Posterior vena cava (tissue), 2 donors: ENCODE measurements at regions of chr3 and their contacts with region 1.

Region 1: DNA sequence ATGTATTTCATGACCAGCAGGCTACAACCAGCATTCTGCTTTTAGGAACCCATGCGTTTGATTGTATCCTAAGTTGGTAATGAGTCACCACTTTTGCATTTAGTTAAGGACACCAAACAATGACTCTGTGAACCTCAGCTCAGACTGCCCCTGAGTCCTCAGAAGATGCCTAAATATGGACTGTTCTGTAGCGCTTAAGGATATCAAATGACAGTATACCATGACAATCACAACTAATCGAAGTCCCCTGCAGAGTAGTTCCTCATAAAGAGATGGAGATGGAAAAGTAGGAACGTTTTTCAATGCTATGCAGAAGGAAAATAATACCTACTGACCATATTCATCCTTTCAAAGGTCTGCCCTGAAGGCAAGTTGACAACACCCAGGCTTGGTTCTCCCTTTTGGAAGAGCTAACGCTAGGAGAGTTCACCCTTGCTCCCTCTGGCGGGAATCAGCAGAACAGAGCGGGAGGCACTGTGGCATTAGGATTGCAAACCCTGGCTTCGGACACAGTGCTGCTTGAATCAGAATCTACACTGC is 508.6 kb downstream of the FHIT start:
- DNase-seq: no peak

Region 2: DNA sequence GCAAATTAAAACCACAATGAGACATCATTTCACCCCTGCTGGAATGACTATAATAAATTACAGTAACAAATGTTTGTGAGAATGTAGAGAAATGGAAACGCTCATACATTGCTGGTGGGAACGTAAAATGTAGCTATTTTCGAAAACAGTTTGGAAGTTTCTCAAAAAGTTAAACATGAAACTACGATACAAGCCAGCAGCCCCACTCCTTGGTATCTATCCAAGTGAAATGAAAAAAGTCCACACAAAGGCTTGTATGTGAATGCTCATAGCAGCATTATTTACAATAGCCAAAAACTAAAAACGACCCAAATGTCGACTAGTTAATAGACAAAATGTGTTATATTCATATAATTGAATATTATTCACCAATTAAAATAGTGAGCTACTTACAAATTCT is 1670.0 kb before region 1 on chr3:
- intact Hi-C with region 1: no loop called
- DNase-seq: no peak

Region 3: DNA sequence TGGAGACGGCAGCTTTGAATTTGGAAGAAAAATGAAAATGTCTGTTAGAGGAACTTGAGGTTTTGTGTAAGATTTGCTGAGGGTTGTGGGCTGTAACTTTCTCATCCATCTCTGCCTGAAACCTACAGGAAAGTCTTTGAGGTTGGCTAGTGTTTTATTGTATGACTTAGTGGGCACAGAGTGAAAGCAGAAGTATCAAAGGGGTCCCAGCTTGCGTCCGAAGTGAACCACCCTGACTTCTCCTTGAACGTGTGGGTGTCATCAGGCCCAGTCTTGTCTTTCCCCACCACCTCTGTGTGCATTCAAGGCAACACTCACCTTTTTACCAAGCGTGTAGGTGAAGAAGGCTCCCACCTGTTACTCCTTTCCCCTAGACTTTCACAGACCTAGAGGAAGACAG is 1010.7 kb before region 1 on chr3:
- intact Hi-C with region 1: loop called in 1 of 2 experiments (anchors 10 kb)
- DNase-seq: no peak

Region 4: GRCh38 chr3:60552581-60552980 is 190.1 kb before region 1 on chr3:
- intact Hi-C with region 1: no loop called
- DNase-seq: no peak

Region 5: GRCh38 chr3:60720736-60721135 is 21.9 kb before region 1 on chr3:
- intact Hi-C with region 1: no loop called
- DNase-seq: no peak

Region 6: GRCh38 chr3:60792297-60792721 is 49.6 kb after region 1 on chr3:
- intact Hi-C with region 1: loop called in 1 of 2 experiments (anchors 1 kb)
- DNase-seq: no peak